ENCODE measurements at regions of chr10 and their contacts with region 1.

Region 1: DNA sequence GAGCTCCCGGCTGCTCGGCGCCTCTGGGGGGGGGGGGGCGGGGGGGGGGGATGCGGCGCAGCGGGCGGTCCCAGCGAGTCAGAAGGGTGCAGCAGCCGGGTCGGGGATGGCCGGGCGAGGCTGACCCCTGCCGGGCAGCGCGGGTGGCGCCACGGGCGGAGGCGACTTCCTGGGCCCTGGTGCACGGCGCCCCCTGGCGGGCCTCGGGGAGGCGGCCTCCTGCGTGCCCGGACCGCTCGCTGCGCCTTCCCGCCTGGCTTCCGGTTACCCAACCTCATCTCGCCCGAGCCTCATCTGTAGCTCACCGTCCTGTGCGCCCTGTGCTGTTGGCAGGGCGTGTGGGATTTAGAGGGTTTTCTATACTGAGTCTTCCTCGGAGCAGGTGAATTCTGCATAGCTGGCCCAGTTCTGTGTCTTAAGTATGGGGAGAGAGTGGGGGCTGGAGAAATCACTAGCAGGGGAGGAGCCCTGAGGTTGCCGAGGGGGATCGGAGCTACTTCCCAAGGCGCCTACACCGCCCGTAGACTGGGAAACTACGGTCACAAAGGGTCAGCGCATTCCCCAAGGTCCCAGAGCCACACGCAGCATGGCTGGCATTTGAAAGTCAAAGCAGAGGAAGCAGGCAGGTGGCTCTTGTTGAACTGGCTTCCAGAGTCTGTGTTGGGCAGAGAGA is 28.3 kb upstream of the WDFY4 start:
- DNase-seq: peak; percentile 54
- ATAC-seq: peak; percentile 90
- H3K4me3 ChIP-seq: peak overlapping the region; percentile 43 to 67
- H3K27ac ChIP-seq: no peak overlapping the region
- H3K4me1 ChIP-seq: peaks cover 6% of the 10 kb centered on the region; the same call in 1 of the 2 replicates
- H3K27me3 ChIP-seq: peaks cover 8% of the 10 kb centered on the region
- CTCF ChIP-seq: peak; percentile 99

Region 2: GRCh38 chr10:48363617-48364355 is 292.6 kb before region 1 on chr10:
- CTCF ChIA-PET with region 1: interaction called, 4 read pairs
- POLR2A ChIA-PET with region 1: no interaction called
- in situ Hi-C with region 1: no loop called
- intact Hi-C with region 1: loop called (anchors 1 kb)
- DNase-seq: peak; percentile 62
- ATAC-seq: peak; percentile 85
- H3K4me3 ChIP-seq: no peak overlapping the region
- H3K27ac ChIP-seq: no peak overlapping the region
- H3K4me1 ChIP-seq: peaks cover 15% of the 10 kb centered on the region; the same call in 1 of the 2 replicates
- H3K27me3 ChIP-seq: no peaks in the 10 kb centered on the region
- CTCF ChIP-seq: peak; percentile 80; the same call in 1 of the 2 replicates

Region 3: GRCh38 chr10:48551861-48552591 is 104.4 kb before region 1 on chr10:
- CTCF ChIA-PET with region 1: interaction called, 17 read pairs
- POLR2A ChIA-PET with region 1: no interaction called
- in situ Hi-C with region 1: no loop called
- intact Hi-C with region 1: loop called (anchors 1 kb)
- DNase-seq: peak; percentile 22
- ATAC-seq: peak; percentile 80
- H3K4me3 ChIP-seq: no peak overlapping the region
- H3K27ac ChIP-seq: no peak overlapping the region
- H3K4me1 ChIP-seq: no peaks in the 10 kb centered on the region
- H3K27me3 ChIP-seq: no peaks in the 10 kb centered on the region
- CTCF ChIP-seq: peak; percentile 86

Region 4: DNA sequence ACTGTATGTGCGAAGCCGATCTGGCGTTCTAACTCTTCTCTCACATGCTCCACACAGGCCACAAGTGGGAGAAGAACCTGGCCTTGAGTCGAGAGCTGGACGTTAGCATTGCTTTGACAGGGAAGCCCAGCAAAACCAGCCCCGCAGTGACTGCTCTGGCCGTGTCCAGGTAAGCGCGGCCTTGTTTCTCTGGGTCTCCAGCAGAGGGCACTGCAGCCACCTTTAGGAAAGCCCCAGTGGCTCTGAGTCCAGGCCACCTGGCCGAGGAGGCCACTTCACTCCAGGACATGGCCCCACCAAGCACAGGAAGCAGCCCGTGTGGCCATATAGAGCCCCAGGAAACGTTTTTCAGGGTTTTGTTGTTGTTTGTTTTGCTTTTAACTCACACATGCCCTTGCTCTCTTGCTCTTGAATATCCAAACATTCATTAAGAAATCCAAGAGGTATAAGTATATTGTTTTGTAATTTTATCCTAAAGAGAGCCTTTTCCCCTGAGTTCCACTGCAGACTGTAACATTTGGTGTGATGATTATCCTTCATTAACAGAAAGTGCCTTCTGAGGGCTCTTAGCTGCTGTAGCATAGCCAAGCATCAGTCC is 325.0 kb after region 1 on chr10:
- CTCF ChIA-PET with region 1: interaction called, 3 read pairs
- POLR2A ChIA-PET with region 1: no interaction called
- in situ Hi-C with region 1: no loop called
- intact Hi-C with region 1: loop called (anchors 5 kb)
- DNase-seq: peak; percentile 15
- ATAC-seq: peak; percentile 92
- H3K4me3 ChIP-seq: no peak overlapping the region
- H3K27ac ChIP-seq: no peak overlapping the region
- H3K4me1 ChIP-seq: no peaks in the 10 kb centered on the region
- H3K27me3 ChIP-seq: no peaks in the 10 kb centered on the region
- CTCF ChIP-seq: peak; percentile 97

Region 5: DNA sequence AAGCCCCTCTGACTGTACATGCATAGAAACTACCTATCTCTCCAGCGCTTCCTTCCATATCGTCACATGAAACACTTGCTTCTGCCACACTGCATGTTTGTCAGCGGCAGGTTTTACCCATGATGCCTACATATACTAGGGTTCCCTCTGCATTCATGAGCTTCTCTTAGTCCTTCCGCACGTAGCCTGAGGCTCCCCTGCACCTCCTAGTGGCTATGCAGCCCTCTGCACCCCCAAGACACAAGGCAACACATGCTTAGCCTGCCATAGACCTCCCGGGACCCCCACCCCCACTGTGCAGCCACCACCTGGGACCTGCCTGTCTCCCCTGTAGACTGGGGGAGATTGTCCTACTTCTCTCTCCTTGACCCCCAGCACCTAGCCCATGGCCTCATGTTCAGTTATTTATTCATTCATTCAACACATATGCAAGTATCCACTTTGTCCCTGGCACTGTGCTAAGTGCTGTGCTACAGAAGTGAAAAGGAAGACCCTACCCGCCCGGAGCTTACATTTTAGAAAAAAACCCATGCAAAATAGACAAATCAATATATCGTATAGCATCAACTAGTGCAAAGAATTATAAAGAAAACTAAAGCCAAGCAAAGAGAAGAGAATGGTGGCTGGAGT is 508.3 kb after region 1 on chr10:
- CTCF ChIA-PET with region 1: interaction called, 6 read pairs
- POLR2A ChIA-PET with region 1: no interaction called
- in situ Hi-C with region 1: no loop called
- intact Hi-C with region 1: loop called (anchors 5 kb)
- DNase-seq: peak; percentile 7
- ATAC-seq: peak; percentile 85
- H3K4me3 ChIP-seq: no peak overlapping the region
- H3K27ac ChIP-seq: no peak overlapping the region
- H3K4me1 ChIP-seq: no peaks in the 10 kb centered on the region
- H3K27me3 ChIP-seq: no peaks in the 10 kb centered on the region; the same call in 1 of the 2 replicates
- CTCF ChIP-seq: peak; percentile 85; the same call in 1 of the 2 replicates

Region 6: GRCh38 chr10:49518982-49519578 is 862.7 kb after region 1 on chr10:
- CTCF ChIA-PET with region 1: interaction called, 3 read pairs
- POLR2A ChIA-PET with region 1: no interaction called
- in situ Hi-C with region 1: no loop called
- intact Hi-C with region 1: loop called (anchors 2 kb)
- DNase-seq: peak; percentile 22
- ATAC-seq: peak; percentile 88
- H3K4me3 ChIP-seq: no peak overlapping the region
- H3K27ac ChIP-seq: no peak overlapping the region
- H3K4me1 ChIP-seq: no peaks in the 10 kb centered on the region
- H3K27me3 ChIP-seq: no peaks in the 10 kb centered on the region
- CTCF ChIP-seq: peak; percentile 87